ENCODE measurements at regions of chr17 and their contacts with region 1.

Region 1: DNA sequence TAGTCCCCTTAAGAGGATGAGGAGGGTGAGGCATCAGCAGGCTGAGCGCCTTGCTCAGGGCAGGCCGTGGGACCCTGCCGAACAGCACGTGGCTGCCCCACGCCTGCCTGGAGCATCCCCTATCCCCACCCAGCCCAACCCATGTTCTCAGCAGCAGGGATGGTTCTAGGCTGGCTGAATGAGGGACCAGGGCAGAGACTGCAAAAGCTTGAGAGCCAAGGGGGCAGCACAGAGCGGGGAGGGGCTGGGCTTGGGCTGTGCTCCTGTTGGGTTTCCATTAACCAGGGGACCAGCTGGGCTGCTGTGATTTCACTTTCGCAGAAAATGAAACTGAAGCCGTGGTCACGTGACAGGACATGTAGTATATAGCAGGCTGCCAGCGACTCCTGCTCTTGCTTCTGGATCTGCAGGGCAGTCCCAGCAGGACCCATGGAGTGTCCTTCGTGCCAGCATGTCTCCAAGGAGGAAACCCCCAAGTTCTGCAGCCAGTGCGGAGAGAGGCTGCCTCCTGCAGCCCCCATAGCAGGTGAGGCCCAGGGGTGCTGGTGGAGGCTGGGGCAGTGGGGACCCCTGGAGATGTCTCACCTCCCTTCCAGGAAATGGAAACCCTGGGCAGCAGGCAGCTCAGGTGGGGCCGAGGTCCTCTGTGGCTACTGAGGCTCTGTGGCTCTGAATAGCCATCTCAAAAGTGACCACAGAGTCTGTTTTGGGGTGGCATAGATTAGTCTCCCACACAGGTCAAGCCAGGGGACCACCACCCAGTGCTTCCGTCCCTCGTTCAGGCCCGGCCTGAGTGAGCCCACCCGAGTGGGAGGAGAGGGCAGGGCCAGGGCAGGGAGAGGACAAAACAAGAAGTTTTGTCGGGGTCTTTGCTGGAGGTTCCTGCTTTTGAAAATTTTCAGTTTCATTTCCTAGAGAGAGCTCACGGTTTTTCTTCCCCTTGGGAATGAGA is 2.9 kb downstream of the RNF213 start:
- DNase-seq: peak; percentile 40 to 89 (median 77)
- ATAC-seq: peak; percentile 46
- H3K4me3 ChIP-seq: peak overlapping the region; percentile 75
- H3K4me3 Mint-ChIP-seq: peak overlapping the region; percentile 77 to 99 (median 96)
- H3K27ac ChIP-seq: peak overlapping the region; percentile 93
- H3K27ac Mint-ChIP-seq: peak overlapping the region; percentile 89 to 98 (median 94)
- H3K4me1 ChIP-seq: peaks cover 47 to 54% of the 10 kb centered on the region in 2 donors
- H3K4me1 Mint-ChIP-seq: peaks cover 33 to 57% (median 46%) of the 10 kb centered on the region in 7 donors
- H3K27me3 ChIP-seq: no peaks in the 10 kb centered on the region
- H3K27me3 Mint-ChIP-seq: peaks cover 0 to 2% (median 0%) of the 10 kb centered on the region in 5 donors

Region 2: DNA sequence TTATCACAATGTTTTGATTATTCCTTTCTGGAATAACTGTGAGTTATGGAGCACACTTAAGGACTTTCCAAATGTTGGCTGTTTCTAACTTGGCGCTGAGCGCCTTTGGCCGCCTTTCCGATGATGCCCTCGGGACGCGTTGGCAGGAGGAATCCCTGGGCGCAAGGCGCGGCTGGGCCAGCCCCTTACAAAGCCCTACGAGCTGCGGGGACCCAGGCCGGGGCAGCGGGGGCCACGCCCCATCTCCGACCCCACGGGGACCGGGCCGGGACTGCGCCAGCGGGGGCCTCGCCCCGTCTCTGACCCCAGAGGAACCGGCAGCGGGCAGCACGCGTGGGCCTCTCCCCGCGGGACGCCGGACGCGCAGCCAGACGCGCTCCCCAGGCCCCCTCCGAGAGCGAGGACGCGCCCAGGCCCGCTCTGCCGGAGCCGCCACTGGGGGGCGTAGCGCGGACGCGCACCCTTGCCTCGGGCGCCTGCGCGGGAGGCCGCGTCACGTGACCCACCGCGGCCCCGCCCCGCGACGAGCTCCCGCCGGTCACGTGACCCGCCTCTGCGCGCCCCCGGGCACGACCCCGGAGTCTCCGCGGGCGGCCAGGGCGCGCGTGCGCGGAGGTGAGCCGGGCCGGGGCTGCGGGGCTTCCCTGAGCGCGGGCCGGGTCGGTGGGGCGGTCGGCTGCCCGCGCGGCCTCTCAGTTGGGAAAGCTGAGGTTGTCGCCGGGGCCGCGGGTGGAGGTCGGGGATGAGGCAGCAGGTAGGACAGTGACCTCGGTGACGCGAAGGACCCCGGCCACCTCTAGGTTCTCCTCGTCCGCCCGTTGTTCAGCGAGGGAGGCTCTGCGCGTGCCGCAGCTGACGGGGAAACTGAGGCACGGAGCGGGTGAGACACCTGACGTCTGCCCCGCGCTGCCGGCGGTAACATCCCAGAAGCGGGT is 162.3 kb before region 1 on chr17 and contains the start of gene GAA:
- CTCF ChIA-PET with region 1: no interaction called
- POLR2A ChIA-PET with region 1: interaction called, 4 read pairs
- intact Hi-C with region 1: loop called in 1 of 2 experiments (anchors 2 kb)
- DNase-seq: peak; percentile 84 to 97 (median 91)
- ATAC-seq: peak; percentile 97
- H3K4me3 ChIP-seq: peak within 1 kb of the TSS; percentile 79
- H3K4me3 Mint-ChIP-seq: peak within 1 kb of the TSS; percentile 85 to 93 (median 90)
- H3K27ac ChIP-seq: peak within 1 kb of the TSS; percentile 86
- H3K27ac Mint-ChIP-seq: peak within 1 kb of the TSS; percentile 81 to 93 (median 86)
- H3K4me1 ChIP-seq: peaks cover 10 to 16% of the 10 kb centered on the region in 2 donors
- H3K4me1 Mint-ChIP-seq: peaks cover 20 to 30% (median 27%) of the 10 kb centered on the region in 7 donors
- H3K27me3 ChIP-seq: no peaks in the 10 kb centered on the region
- H3K27me3 Mint-ChIP-seq: peaks cover 0 to 10% (median 0%) of the 10 kb centered on the region in 5 donors
- total RNA-seq, gene GAA: 18.5 to 67.8 (median 54.6) TPM

Region 3: DNA sequence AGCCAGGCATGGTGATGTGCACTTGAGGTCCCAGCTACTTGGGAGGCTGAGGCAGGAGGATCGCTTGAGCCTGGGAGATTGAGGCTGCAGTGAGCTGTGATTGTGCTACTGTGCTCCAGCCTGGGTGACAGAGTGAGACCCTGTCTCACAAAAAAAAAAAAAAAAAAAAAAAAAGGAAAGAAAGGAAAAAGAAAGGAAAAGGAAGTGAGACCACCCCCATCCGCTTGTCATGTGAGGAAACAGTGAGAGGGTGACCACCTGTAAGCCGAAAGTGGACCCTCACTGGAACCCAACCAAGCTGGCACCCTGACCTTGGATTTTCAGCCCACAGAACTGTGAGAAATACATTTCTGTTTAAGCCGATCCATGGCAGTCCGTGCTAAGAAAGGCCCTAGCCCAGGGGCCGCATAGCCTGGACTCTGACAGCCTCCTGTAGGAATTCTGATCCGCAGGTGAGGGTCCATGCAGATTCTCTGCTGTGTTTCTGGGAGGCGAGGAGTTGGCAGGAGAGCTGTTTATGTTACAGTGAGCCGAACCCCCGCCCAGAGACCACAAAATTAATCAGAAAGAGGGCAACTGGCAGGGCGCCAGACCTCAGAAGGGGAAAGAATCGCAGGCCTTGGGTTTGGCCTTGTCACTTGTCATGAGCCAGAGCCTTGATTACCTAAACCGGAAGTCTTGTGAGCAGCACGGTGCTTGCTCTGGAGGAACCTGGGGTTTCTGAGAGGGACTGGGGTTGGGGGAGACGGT is 44.3 kb before region 1 on chr17:
- CTCF ChIA-PET with region 1: no interaction called
- POLR2A ChIA-PET with region 1: interaction called, 14 read pairs
- intact Hi-C with region 1: loop called in 1 of 2 experiments (anchors 1 kb)
- DNase-seq: peak; percentile 77 to 90 (median 86)
- ATAC-seq: peak; percentile 90
- H3K4me3 ChIP-seq: peak overlapping the region; percentile 84
- H3K4me3 Mint-ChIP-seq: peak overlapping the region; percentile 86 to 96 (median 92)
- H3K27ac ChIP-seq: peak overlapping the region; percentile 93
- H3K27ac Mint-ChIP-seq: peak overlapping the region; percentile 86 to 98 (median 95)
- H3K4me1 ChIP-seq: peaks cover 13 to 30% of the 10 kb centered on the region in 2 donors
- H3K4me1 Mint-ChIP-seq: peaks cover 21 to 40% (median 26%) of the 10 kb centered on the region in 7 donors
- H3K27me3 ChIP-seq: no peaks in the 10 kb centered on the region
- H3K27me3 Mint-ChIP-seq: peaks cover 0 to 3% (median 0%) of the 10 kb centered on the region in 5 donors

Region 4: GRCh38 chr17:80237351-80237750 is 26.2 kb before region 1 on chr17:
- CTCF ChIA-PET with region 1: no interaction called
- POLR2A ChIA-PET with region 1: no interaction called
- intact Hi-C with region 1: no loop called
- DNase-seq: no peak
- ATAC-seq: no peak
- H3K4me3 ChIP-seq: no peak overlapping the region
- H3K4me3 Mint-ChIP-seq: no peak overlapping the region
- H3K27ac ChIP-seq: no peak overlapping the region
- H3K27ac Mint-ChIP-seq: no peak overlapping the region
- H3K4me1 ChIP-seq: no peaks in the 10 kb centered on the region
- H3K4me1 Mint-ChIP-seq: no peaks in the 10 kb centered on the region
- H3K27me3 ChIP-seq: no peaks in the 10 kb centered on the region
- H3K27me3 Mint-ChIP-seq: no peaks in the 10 kb centered on the region

Region 5: GRCh38 chr17:80303824-80304223 is 40.3 kb after region 1 on chr17:
- CTCF ChIA-PET with region 1: interaction called, 3 read pairs
- POLR2A ChIA-PET with region 1: interaction called, 4 read pairs
- intact Hi-C with region 1: loop called in 1 of 2 experiments (anchors 5 kb)
- DNase-seq: no peak
- ATAC-seq: no peak
- H3K4me3 ChIP-seq: no peak overlapping the region
- H3K4me3 Mint-ChIP-seq: no peak overlapping the region
- H3K27ac ChIP-seq: no peak overlapping the region
- H3K27ac Mint-ChIP-seq: no peak overlapping the region
- H3K4me1 ChIP-seq: no peaks in the 10 kb centered on the region
- H3K4me1 Mint-ChIP-seq: peaks cover 0 to 21% (median 4%) of the 10 kb centered on the region in 7 donors
- H3K27me3 ChIP-seq: no peaks in the 10 kb centered on the region
- H3K27me3 Mint-ChIP-seq: no peaks in the 10 kb centered on the region

Region 6: DNA sequence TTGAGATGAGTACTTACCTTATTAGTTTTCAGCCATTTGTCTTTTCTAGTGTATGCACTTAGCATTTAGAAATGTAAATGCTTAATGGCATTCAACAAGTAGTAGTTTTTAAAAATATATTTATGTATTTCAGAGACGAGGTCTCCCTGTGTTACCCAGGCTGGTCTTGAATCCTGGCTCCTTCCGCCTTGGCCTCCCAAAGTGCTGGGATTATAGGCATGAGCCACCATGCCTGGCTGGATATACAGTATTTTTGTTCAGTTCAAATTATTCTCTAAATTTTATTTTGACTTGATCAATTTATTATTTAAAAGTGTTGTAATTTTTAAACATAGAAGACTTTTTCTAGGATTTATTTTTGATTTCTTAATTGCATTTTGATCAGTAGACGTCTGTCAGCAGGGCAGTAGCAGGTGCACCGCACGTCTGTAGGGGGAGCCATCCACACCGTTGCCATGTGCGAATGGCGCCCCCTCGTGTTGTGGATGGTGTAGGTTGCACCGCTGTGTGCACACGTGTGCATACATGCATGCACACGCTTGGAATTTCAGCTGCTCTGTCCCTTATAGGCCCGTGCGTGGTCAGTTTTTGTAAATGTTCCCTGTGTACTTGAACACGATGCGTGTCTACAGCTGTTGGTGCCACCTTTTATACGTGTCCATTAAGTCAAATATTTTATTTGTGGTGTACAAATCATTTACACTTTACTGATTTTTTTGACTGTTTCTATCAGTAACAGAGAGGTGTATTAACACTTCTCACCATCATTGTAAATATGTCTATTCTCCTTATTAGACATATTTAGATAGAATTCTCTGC is 311.7 kb after region 1 on chr17:
- CTCF ChIA-PET with region 1: no interaction called
- POLR2A ChIA-PET with region 1: no interaction called
- intact Hi-C with region 1: no loop called
- DNase-seq: peak; percentile 72 to 89 (median 83)
- ATAC-seq: peak; percentile 100
- H3K4me3 ChIP-seq: no peak overlapping the region
- H3K4me3 Mint-ChIP-seq: peak overlapping the region in 2 of 10 donors; percentile 10 to 36
- H3K27ac ChIP-seq: no peak overlapping the region
- H3K27ac Mint-ChIP-seq: peak overlapping the region in 4 of 9 donors; percentile 12 to 31 (median 13)
- H3K4me1 ChIP-seq: no peaks in the 10 kb centered on the region
- H3K4me1 Mint-ChIP-seq: peaks cover 11 to 46% (median 30%) of the 10 kb centered on the region in 7 donors
- H3K27me3 ChIP-seq: no peaks in the 10 kb centered on the region
- H3K27me3 Mint-ChIP-seq: no peaks in the 10 kb centered on the region

Region 7: GRCh38 chr17:81927653-81928543 is 1664.4 kb after region 1 on chr17 and contains the start of gene MAFG:
- CTCF ChIA-PET with region 1: no interaction called
- POLR2A ChIA-PET with region 1: no interaction called
- intact Hi-C with region 1: loop called in 1 of 2 experiments (anchors 5 kb)
- DNase-seq: peak; percentile 81 to 93 (median 88)
- ATAC-seq: peak; percentile 72
- H3K4me3 ChIP-seq: peak within 1 kb of the TSS; percentile 58
- H3K4me3 Mint-ChIP-seq: peak within 1 kb of the TSS; percentile 77 to 91 (median 84)
- H3K27ac ChIP-seq: peak within 1 kb of the TSS; percentile 71
- H3K27ac Mint-ChIP-seq: peak within 1 kb of the TSS; percentile 69 to 95 (median 88)
- H3K4me1 ChIP-seq: peaks cover 10 to 31% of the 10 kb centered on the region in 2 donors
- H3K4me1 Mint-ChIP-seq: peaks cover 9 to 29% (median 20%) of the 10 kb centered on the region in 7 donors
- H3K27me3 ChIP-seq: peaks cover 0 to 13% of the 10 kb centered on the region in 2 donors
- H3K27me3 Mint-ChIP-seq: peaks cover 0 to 18% (median 0%) of the 10 kb centered on the region in 5 donors
- total RNA-seq, gene MAFG: 12.9 to 28.1 (median 18.1) TPM